BJ (cell line): ENCODE measurements at regions of chr17 and their contacts with region 1.

Region 1: GRCh38 chr17:7204828-7205461 is 14.7 kb downstream of the DLG4 start:
- DNase-seq: no peak
- H3K4me3 ChIP-seq: peak overlapping the region; percentile 33
- H3K27me3 ChIP-seq: no peaks in the 10 kb centered on the region
- CTCF ChIP-seq: no peak

Region 2: GRCh38 chr17:7219812-7220581 is 15.1 kb after region 1 on chr17 and contains the starts of genes ACADVL and DLG4:
- CTCF ChIA-PET with region 1: interaction called, 3 read pairs
- POLR2A ChIA-PET with region 1: interaction called, 22 read pairs
- DNase-seq: peak; percentile 37
- H3K4me3 ChIP-seq: peak within 1 kb of the TSS; percentile 84
- H3K27me3 ChIP-seq: no peaks in the 10 kb centered on the region
- CTCF ChIP-seq: no peak
- polyA plus RNA-seq, gene ACADVL: 335 and 517 TPM in 2 replicates
- polyA plus RNA-seq, gene DLG4: 13.3 and 20.4 TPM in 2 replicates

Region 3: GRCh38 chr17:7329374-7329996 is 124.5 kb after region 1 on chr17:
- CTCF ChIA-PET with region 1: no interaction called
- POLR2A ChIA-PET with region 1: interaction called, 22 read pairs
- DNase-seq: peak; percentile 95
- H3K4me3 ChIP-seq: peak overlapping the region; percentile 64
- H3K27me3 ChIP-seq: no peaks in the 10 kb centered on the region; the same call in 1 of the 2 replicates
- CTCF ChIP-seq: no peak

Region 4: GRCh38 chr17:7363311-7363710 is 158.4 kb after region 1 on chr17:
- CTCF ChIA-PET with region 1: no interaction called
- POLR2A ChIA-PET with region 1: no interaction called
- DNase-seq: no peak
- H3K4me3 ChIP-seq: no peak overlapping the region
- H3K27me3 ChIP-seq: no peaks in the 10 kb centered on the region
- CTCF ChIP-seq: no peak